ENCODE measurements at regions of chr15 and their contacts with region 1.

Region 1: DNA sequence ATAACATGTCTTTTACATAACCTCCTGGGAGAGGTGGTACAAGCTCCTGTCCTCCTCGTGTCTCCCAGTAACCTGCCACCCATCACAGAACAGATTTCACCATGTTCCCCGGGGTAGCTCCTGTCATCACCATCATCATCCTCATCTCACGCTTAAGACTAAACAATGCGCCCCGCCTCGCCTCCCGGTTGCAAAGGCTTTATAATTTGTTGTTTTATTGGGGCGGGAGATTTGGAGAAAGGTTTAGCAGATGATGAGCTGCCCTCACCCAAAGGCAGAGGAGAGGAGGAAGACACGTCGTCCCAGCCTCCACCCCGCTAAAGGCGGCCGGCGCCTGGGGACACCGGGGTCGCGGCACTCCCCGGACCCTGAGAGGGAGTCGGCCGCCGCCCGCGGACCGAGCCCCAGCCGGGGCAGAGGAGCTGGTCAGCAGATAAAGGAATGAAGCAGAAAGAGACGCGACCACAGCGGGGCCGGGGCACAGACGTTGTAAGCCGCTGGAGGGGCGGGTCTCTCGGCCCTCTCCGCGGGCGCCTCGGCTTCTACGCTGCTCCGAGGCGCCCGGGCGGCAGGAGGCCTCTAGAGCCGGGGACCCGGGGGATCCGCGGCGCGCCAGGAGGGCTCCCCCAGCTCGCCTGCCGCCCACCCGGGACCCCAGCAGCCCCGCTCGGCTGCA is 589 bp downstream of the HERC1 start:
- DNase-seq: peak in 8 of 10 donors; percentile 9 to 85 (median 30)

Region 2: DNA sequence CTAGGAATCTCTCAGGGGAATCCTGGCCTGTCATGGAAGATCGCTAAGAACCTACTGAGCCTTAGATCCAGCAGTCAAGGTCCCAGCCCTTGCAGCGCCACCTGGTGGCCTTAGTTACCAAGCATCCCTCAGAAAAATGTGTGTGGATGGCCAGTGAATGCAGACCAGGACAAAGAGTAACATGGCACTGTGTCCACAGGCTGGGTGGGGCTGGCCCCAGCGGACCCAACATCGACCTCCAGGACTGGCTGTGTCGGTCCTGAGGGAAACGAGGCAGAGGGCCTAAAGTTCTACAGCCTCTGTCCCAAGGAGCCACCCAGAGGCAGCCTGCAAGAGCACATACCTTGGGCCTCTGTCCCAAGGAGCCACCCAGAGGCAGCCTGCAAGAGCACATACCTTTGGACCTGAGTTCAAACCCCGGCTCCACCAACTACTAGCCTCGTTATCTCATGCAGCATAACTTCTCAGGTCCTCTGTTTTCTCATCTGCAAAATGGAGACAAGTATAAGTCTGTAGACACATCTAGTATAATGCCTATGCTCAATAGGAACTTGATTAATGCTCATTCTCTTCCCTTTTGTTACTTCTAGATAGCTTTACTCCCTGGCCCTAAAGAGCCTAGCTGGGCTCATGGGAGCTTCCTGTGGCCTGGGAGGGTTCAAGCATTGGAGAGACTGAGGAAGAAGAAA is 58.1 kb after region 1 on chr15:
- intact Hi-C with region 1: loop called (anchors 5 kb)
- DNase-seq: peak; percentile 56 to 97 (median 84)

Region 3: GRCh38 chr15:64067564-64068030 is 234.4 kb after region 1 on chr15:
- intact Hi-C with region 1: loop called (anchors 10 kb)
- DNase-seq: peak in 7 of 10 donors; percentile 43 to 89 (median 71)